Panc1 (cell line): ENCODE measurements at regions of chr6 and their contacts with region 1.

Region 1: GRCh38 chr6:152669895-152670294 is 27.8 kb upstream of the MYCT1 start:
- DNase-seq: no peak
- ATAC-seq: peak; percentile 72; the same call in 1 of the 2 replicates
- H3K4me3 ChIP-seq: no peak overlapping the region
- H3K27ac ChIP-seq: no peak overlapping the region
- H3K4me1 ChIP-seq: no peaks in the 10 kb centered on the region
- H3K27me3 ChIP-seq: no peaks in the 10 kb centered on the region
- CTCF ChIP-seq: peak; percentile 41; the same call in 1 of the 2 replicates

Region 2: DNA sequence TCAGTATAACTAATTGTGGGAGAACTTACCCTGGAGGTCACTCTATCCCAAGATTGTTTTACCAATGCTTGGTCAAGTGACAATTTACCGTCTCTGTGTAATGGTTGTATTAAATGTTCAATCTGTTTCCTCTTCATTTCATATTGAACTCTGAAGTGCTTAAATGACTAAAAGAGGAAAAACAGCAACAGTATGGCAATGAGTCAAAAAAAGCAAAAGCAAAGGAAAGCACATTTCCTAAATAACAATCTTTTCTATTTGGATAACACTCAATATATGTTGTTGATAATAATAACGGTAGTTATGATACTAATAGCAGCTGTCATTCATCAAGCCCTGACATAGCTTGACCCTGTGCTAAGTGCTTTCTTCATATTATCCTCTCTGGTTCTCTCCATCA is 185.1 kb before region 1 on chr6:
- CTCF ChIA-PET with region 1: no interaction called
- POLR2A ChIA-PET with region 1: no interaction called
- in situ Hi-C with region 1: no loop called
- intact Hi-C with region 1: loop called (anchors 5 kb)
- DNase-seq: no peak
- ATAC-seq: no peak
- H3K4me3 ChIP-seq: no peak overlapping the region
- H3K27ac ChIP-seq: no peak overlapping the region
- H3K4me1 ChIP-seq: no peaks in the 10 kb centered on the region
- H3K27me3 ChIP-seq: no peaks in the 10 kb centered on the region
- CTCF ChIP-seq: no peak